CD4-positive, alpha-beta T cell (primary cell): ENCODE measurements at regions of chr18 and their contacts with region 1.

Region 1: DNA sequence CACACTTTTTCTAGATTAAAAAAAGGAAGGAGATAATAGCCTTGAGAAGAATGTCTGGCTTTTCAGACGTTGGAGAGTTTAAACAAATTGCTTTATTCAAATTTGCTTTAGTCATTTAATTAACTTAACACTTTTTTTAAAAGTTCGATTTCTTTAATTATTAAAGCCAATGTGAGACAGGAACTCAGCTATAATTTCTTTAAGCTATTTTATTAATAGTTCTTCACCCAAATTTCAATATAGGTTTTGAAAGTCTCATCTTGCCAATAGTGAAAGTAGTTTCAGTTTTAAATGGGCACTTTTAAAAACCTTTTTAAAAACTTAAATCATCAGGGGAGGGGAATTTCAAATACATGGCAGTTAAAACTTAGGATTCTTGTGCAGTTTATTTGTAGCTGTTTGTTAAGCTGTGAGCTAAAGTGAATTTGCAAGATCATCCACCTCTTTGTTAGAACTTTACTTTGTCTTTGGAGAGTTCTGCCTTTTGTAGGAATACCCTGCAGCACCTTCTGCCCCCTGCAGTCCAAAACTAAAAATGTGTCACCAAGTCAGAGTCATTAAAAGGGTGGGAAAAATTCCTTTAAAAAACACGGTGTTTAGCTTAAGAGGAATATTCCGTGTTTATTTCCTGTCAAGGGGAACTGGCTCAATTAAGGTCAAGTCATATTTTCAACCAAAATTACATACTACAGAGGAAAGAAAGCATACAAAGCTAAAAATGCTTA is 4.6 kb downstream of the TGIF1 start:
- DNase-seq: peak in 7 of 14 experiments; percentile 13 to 78 (median 58)
- ATAC-seq: no peak
- H3K4me3 ChIP-seq: peak overlapping the region; percentile 90
- H3K4me3 Mint-ChIP-seq: peak overlapping the region; percentile 98
- H3K27ac ChIP-seq: peak overlapping the region; percentile 75 to 98
- H3K27ac Mint-ChIP-seq: peak overlapping the region; percentile 99
- H3K4me1 ChIP-seq: peaks cover 50% of the 10 kb centered on the region
- H3K4me1 Mint-ChIP-seq: peaks cover 73% of the 10 kb centered on the region
- H3K27me3 ChIP-seq: no peaks in the 10 kb centered on the region
- H3K27me3 Mint-ChIP-seq: no peaks in the 10 kb centered on the region
- CTCF ChIP-seq: peak; percentile 91

Region 2: GRCh38 chr18:2536493-2536892 is 918.0 kb before region 1 on chr18:
- CTCF ChIA-PET with region 1: no interaction called
- POLR2A ChIA-PET with region 1: no interaction called
- intact Hi-C with region 1: no loop called
- DNase-seq: no peak
- ATAC-seq: no peak
- H3K4me3 ChIP-seq: no peak overlapping the region
- H3K4me3 Mint-ChIP-seq: no peak overlapping the region
- H3K27ac ChIP-seq: no peak overlapping the region
- H3K27ac Mint-ChIP-seq: no peak overlapping the region
- H3K4me1 ChIP-seq: no peaks in the 10 kb centered on the region
- H3K4me1 Mint-ChIP-seq: no peaks in the 10 kb centered on the region
- H3K27me3 ChIP-seq: no peaks in the 10 kb centered on the region
- H3K27me3 Mint-ChIP-seq: no peaks in the 10 kb centered on the region
- CTCF ChIP-seq: no peak

Region 3: DNA sequence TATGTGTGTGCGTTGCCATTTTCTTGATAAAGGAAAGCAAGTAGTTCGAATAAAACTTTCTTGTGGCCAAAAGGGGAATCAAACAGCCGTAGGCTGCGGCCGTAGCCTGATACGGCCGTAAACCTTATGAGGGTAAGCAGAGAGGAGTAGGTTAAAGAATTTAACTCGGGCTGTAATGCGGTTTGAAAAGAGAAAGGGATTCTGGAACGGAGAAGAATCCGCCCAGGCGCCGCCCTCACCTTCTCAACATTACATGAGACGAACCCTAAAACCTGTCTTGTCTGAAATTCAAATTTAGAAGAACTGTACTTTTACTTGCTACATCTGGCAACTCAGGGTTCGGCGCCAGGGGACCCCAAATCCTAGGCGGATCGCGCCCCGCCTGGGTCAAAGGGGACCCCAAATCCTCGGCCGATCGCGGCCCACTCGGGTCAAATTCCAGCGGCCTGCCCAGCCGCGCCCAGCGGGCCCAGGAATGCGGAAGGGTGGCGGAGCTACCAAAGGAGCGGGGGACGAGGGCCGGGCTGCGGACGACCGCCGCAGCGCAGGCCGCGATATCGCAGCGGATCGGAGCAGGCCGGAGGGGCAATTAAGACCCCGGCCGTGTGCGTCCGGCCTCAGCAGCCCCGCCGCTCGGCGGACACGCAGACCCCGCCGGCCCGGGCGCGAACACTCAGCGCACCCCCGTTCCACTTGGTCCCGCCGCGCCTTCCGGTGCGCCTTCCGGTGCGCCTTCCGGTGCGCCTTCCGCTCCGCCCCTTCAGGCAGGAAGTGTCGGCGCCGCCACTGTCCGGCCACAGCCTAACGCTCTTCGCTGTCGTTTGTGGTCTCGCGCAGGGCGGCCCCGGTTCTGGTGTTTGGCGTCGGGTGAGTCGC is 192.9 kb before region 1 on chr18 and contains the start of gene MYL12B:
- CTCF ChIA-PET with region 1: interaction called, 6 read pairs
- POLR2A ChIA-PET with region 1: interaction called, 32 read pairs
- intact Hi-C with region 1: loop called (anchors 5 kb)
- DNase-seq: peak; percentile 63 to 92 (median 75)
- ATAC-seq: peak; percentile 71
- H3K4me3 ChIP-seq: peak within 1 kb of the TSS; percentile 68
- H3K4me3 Mint-ChIP-seq: peak within 1 kb of the TSS; percentile 100
- H3K27ac ChIP-seq: peak within 1 kb of the TSS; percentile 95 to 98
- H3K27ac Mint-ChIP-seq: peak within 1 kb of the TSS; percentile 100
- H3K4me1 ChIP-seq: peaks cover 43% of the 10 kb centered on the region
- H3K4me1 Mint-ChIP-seq: peaks cover 85% of the 10 kb centered on the region
- H3K27me3 ChIP-seq: no peaks in the 10 kb centered on the region
- H3K27me3 Mint-ChIP-seq: no peaks in the 10 kb centered on the region
- CTCF ChIP-seq: no peak
- total RNA-seq, gene MYL12B: 128 to 133 TPM

Region 4: GRCh38 chr18:3297025-3297984 is 157.2 kb before region 1 on chr18:
- CTCF ChIA-PET with region 1: interaction called, 24 read pairs
- POLR2A ChIA-PET with region 1: interaction called, 41 read pairs
- intact Hi-C with region 1: loop called (anchors 1 to 5 kb)
- DNase-seq: peak; percentile 88 to 96 (median 92)
- ATAC-seq: peak; percentile 96
- H3K4me3 ChIP-seq: peak overlapping the region; percentile 65
- H3K4me3 Mint-ChIP-seq: peak overlapping the region; percentile 91
- H3K27ac ChIP-seq: no peak overlapping the region
- H3K27ac Mint-ChIP-seq: peak overlapping the region; percentile 79
- H3K4me1 ChIP-seq: peaks cover 11% of the 10 kb centered on the region
- H3K4me1 Mint-ChIP-seq: peaks cover 11% of the 10 kb centered on the region
- H3K27me3 ChIP-seq: peaks cover 0 to 15% of the 10 kb centered on the region in 2 experiments
- H3K27me3 Mint-ChIP-seq: peaks cover 35% of the 10 kb centered on the region
- CTCF ChIP-seq: peak; percentile 80

Region 5: GRCh38 chr18:3380384-3380961 is 74.1 kb before region 1 on chr18:
- CTCF ChIA-PET with region 1: interaction called, 12 read pairs
- POLR2A ChIA-PET with region 1: interaction called, 3 read pairs
- intact Hi-C with region 1: loop called (anchors 2 to 5 kb)
- DNase-seq: peak in 3 of 14 experiments; percentile 52 to 62 (median 54)
- ATAC-seq: peak; percentile 51
- H3K4me3 ChIP-seq: no peak overlapping the region
- H3K4me3 Mint-ChIP-seq: no peak overlapping the region
- H3K27ac ChIP-seq: no peak overlapping the region
- H3K27ac Mint-ChIP-seq: no peak overlapping the region
- H3K4me1 ChIP-seq: no peaks in the 10 kb centered on the region
- H3K4me1 Mint-ChIP-seq: no peaks in the 10 kb centered on the region
- H3K27me3 ChIP-seq: no peaks in the 10 kb centered on the region
- H3K27me3 Mint-ChIP-seq: no peaks in the 10 kb centered on the region
- CTCF ChIP-seq: no peak

Region 6: DNA sequence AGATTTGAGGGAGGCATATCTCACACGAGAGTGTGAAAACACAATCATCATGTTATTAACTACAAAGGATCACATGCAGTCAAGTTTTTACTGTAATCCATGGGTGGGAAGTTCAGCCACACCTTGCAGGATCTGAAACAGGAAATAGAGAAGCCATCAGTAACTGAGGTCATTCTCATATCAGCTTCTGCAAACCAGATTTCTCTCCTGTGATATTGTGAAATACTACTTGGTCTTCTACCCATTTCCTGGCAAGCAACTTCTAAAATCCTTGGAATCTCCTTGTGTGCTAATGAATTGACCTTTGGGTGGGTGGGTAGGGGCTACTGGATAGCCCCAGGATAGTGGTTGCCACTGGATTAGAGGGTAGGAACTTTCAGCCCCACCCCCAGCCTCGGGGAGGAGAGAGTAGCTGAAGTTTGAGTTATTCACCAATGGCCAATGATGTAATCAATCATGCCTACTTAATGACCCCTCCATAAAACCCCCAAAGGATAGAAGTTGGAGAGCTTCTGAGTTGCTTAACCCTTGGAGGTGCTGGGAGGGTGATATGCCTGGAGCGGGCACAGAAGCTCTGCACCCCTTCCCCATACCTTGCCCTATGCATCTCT is 30.1 kb before region 1 on chr18:
- CTCF ChIA-PET with region 1: no interaction called
- POLR2A ChIA-PET with region 1: no interaction called
- intact Hi-C with region 1: no loop called
- DNase-seq: no peak
- ATAC-seq: no peak
- H3K4me3 ChIP-seq: no peak overlapping the region
- H3K4me3 Mint-ChIP-seq: no peak overlapping the region
- H3K27ac ChIP-seq: no peak overlapping the region
- H3K27ac Mint-ChIP-seq: no peak overlapping the region
- H3K4me1 ChIP-seq: no peaks in the 10 kb centered on the region
- H3K4me1 Mint-ChIP-seq: no peaks in the 10 kb centered on the region
- H3K27me3 ChIP-seq: no peaks in the 10 kb centered on the region
- H3K27me3 Mint-ChIP-seq: no peaks in the 10 kb centered on the region
- CTCF ChIP-seq: no peak

Region 7: GRCh38 chr18:3466045-3466444 is 11.5 kb after region 1 on chr18:
- CTCF ChIA-PET with region 1: interaction called, 13 read pairs
- POLR2A ChIA-PET with region 1: interaction called, 66 read pairs
- intact Hi-C with region 1: no loop called
- DNase-seq: no peak
- ATAC-seq: no peak
- H3K4me3 ChIP-seq: no peak overlapping the region
- H3K4me3 Mint-ChIP-seq: no peak overlapping the region
- H3K27ac ChIP-seq: peak overlapping the region in 1 of 2 donors; percentile 21
- H3K27ac Mint-ChIP-seq: peak overlapping the region; percentile 16
- H3K4me1 ChIP-seq: peaks cover 11% of the 10 kb centered on the region
- H3K4me1 Mint-ChIP-seq: peaks cover 22% of the 10 kb centered on the region
- H3K27me3 ChIP-seq: no peaks in the 10 kb centered on the region
- H3K27me3 Mint-ChIP-seq: no peaks in the 10 kb centered on the region
- CTCF ChIP-seq: no peak

Region 8: DNA sequence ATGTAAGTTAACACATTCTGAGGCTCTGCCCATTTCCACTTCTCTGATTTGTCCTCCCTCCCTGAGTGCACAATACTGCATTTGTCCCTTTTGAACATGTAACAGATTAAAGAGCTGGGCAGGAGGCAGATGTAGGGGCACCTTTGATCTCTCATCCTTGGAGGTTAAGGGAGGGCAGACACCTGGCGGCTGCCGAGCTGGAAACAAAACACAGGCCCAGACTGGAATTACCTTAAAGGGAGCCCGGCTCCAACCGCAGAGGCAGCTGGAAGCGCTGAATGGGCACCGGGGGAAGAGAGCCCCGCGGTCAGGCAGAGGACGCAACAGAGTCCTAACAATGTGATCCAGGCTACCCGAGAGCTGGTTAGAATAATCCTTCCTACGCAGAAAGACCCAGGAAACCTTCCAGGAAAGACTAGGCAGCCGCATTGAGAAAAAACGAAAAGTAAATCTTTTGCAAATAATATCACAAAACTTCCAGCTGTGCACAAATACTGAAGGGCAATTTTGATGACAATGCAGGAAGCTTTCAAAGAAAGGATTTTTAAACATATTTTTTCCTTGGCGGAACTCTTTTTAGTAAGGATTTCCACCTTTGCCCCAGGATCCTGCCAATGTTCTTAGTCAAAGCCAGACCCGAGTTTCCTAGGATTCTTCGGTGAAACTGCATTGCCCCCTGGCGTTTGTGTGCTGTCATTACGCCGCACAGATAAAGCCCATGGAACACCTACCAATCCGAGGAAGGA is 211.4 kb after region 1 on chr18:
- CTCF ChIA-PET with region 1: interaction called, 23 read pairs
- POLR2A ChIA-PET with region 1: interaction called, 7 read pairs
- intact Hi-C with region 1: loop called (anchors 1 to 2 kb)
- DNase-seq: peak; percentile 48 to 86 (median 70)
- ATAC-seq: peak; percentile 88
- H3K4me3 ChIP-seq: peak overlapping the region; percentile 19
- H3K4me3 Mint-ChIP-seq: no peak overlapping the region
- H3K27ac ChIP-seq: no peak overlapping the region
- H3K27ac Mint-ChIP-seq: no peak overlapping the region
- H3K4me1 ChIP-seq: peaks cover 7% of the 10 kb centered on the region
- H3K4me1 Mint-ChIP-seq: peaks cover 7% of the 10 kb centered on the region
- H3K27me3 ChIP-seq: no peaks in the 10 kb centered on the region
- H3K27me3 Mint-ChIP-seq: no peaks in the 10 kb centered on the region
- CTCF ChIP-seq: peak; percentile 94